BJ (cell line): ENCODE measurements at regions of chr12 and their contacts with region 1.

Region 1: DNA sequence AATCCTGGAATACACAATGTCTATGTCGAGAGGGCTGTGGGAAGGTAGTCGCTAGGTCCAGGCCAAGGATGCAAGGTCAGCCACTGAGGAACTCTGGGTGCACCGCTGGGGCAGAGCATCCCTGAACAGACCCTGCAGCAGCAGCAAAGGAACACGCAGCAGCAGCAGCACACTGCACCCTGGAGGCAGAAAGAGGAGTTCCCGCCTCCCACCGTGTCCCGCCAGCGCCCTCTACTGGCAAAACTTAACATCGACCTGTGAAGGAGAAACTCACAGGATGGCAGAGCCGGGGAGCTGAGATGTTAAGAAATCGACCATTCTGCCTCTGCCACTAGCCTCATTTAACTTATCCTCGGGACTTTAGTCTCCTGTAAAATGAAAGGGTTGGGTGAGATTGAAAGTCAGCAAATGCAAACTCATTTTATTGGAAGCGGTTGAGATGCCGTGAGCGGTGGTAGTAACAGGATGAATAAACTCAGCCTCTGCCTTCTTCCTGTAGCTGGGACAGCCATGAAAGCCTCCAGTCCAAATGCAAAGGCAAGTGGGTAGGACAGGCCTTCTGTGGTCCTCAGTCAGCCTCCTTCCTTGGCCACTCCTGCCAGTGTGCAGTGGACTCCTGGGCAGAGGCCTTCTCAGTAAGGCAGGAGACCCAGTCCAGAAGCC is 45.6 kb downstream of the STAB2 start:
- DNase-seq: no peak
- H3K4me3 ChIP-seq: no peak overlapping the region
- H3K27me3 ChIP-seq: peaks cover 4% of the 10 kb centered on the region
- CTCF ChIP-seq: peak; percentile 93

Region 2: GRCh38 chr12:102596031-102596430 is 1036.7 kb before region 1 on chr12:
- CTCF ChIA-PET with region 1: no interaction called
- POLR2A ChIA-PET with region 1: no interaction called
- DNase-seq: no peak
- H3K4me3 ChIP-seq: no peak overlapping the region
- H3K27me3 ChIP-seq: no peaks in the 10 kb centered on the region
- CTCF ChIP-seq: no peak

Region 3: GRCh38 chr12:103647267-103647666 is 14.6 kb after region 1 on chr12:
- CTCF ChIA-PET with region 1: interaction called, 17 read pairs
- POLR2A ChIA-PET with region 1: no interaction called
- DNase-seq: peak; percentile 11
- H3K4me3 ChIP-seq: no peak overlapping the region
- H3K27me3 ChIP-seq: no peaks in the 10 kb centered on the region
- CTCF ChIP-seq: no peak

Region 4: DNA sequence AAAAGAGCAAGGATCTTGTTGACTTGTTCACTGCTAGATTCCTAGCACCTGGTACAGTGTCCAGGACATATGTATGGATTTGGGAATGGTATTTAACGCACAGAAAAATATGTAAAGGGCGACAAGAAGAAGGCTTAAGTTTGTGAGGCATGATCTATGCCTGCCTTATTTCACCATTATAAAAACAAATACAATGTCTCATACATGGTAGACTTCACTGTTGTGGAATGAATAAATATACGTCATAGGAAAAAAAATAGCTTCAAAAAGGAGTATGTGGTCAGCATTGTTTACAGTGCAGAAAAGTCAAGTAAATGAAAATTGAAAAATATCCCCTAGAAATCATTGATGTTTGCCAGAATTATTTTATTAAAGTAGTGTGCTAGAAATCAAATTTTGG is 461.6 kb after region 1 on chr12:
- CTCF ChIA-PET with region 1: no interaction called
- POLR2A ChIA-PET with region 1: no interaction called
- DNase-seq: no peak
- H3K4me3 ChIP-seq: no peak overlapping the region
- H3K27me3 ChIP-seq: no peaks in the 10 kb centered on the region
- CTCF ChIP-seq: no peak